Dendritic cell treated with granulocyte-macrophage colony-stimulating factor and Interleukin-4, amounts not matched to agents 40 ng/mL and 50 ng/mL, for 4 days (primary cell): ENCODE measurements at regions of chr3 and their contacts with region 1.

Region 1: GRCh38 chr3:119662604-119663373 is 2.4 kb upstream of the POPDC2 start:
- H3K4me3 Mint-ChIP-seq: no peak overlapping the region
- H3K27ac Mint-ChIP-seq: peak overlapping the region; percentile 1
- H3K4me1 Mint-ChIP-seq: peaks cover 67% of the 10 kb centered on the region
- H3K27me3 Mint-ChIP-seq: no peaks in the 10 kb centered on the region

Region 2: GRCh38 chr3:119104031-119104430 is 558.8 kb before region 1 on chr3:
- intact Hi-C with region 1: no loop called
- H3K4me3 Mint-ChIP-seq: no peak overlapping the region
- H3K27ac Mint-ChIP-seq: no peak overlapping the region
- H3K4me1 Mint-ChIP-seq: no peaks in the 10 kb centered on the region
- H3K27me3 Mint-ChIP-seq: peaks cover 2% of the 10 kb centered on the region

Region 3: DNA sequence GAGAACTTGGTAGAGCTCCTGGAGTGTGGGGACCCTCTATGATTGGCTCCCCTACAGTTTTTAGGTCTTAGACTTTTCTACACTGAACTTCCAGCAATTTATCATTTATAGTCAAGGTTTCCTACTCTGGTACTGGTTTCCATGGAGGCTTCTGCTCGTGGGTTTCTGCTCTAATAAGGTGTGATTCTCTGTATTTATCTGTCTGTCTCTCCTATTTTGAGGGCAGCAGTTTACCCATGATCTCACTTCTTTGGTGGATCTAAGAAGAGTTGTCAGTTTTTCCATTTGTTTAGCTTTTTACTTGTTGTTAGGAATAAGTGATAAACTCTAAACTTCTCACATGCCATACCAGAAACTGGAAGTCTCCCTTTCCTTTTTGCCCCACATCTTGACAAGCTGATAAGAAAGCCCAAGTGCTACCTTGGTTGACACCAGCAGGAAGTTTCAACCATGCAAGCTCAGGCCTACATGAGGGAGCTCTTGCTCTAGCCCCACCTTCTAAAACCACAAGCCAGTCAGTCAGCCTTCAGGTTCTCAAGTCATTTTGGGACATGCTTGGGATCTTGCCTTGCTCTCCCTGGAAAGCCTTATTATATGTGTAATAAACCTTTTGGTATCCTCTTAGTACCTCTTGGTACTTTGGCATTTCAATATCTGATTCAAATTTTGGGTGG is 154.5 kb before region 1 on chr3:
- intact Hi-C with region 1: no loop called
- H3K4me3 Mint-ChIP-seq: no peak overlapping the region
- H3K27ac Mint-ChIP-seq: no peak overlapping the region
- H3K4me1 Mint-ChIP-seq: peaks cover 30% of the 10 kb centered on the region
- H3K27me3 Mint-ChIP-seq: no peaks in the 10 kb centered on the region

Region 4: GRCh38 chr3:119600732-119601131 is 62.1 kb before region 1 on chr3:
- intact Hi-C with region 1: loop called (anchors 5 kb)
- H3K4me3 Mint-ChIP-seq: no peak overlapping the region
- H3K27ac Mint-ChIP-seq: peak overlapping the region; percentile 44
- H3K4me1 Mint-ChIP-seq: peaks cover 64% of the 10 kb centered on the region
- H3K27me3 Mint-ChIP-seq: no peaks in the 10 kb centered on the region

Region 5: DNA sequence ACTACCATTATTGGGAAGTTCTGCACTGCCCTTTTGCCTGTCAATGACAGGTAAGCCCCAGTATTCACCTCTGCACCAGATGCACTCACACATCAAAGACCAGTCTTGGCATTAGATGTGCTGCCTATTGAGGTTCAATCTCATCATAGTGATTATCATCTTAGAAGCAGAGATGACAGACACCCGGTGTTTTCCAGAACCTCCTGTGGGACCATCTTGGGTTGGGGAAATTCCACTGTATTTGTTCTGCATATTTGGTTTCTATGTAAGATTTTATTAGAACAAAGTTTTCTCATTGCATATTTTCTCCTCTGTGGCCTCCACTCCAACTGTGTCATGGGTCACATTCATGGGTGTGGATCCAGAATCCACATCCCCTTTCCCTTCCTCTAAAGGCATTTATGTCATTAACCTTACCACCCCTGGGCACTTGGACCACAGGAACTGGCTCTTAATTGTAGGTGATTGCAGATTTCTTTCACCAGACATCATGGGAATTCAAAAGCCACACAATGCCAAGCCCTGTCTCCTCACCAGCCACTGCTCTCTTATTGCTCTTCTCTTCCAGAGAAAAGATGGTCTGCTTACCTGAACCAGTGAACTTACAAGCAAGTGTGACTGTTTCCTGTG is 33.9 kb before region 1 on chr3:
- intact Hi-C with region 1: loop called (anchors 5 kb)
- H3K4me3 Mint-ChIP-seq: peak overlapping the region; percentile 6
- H3K27ac Mint-ChIP-seq: peak overlapping the region; percentile 89
- H3K4me1 Mint-ChIP-seq: peaks cover 92% of the 10 kb centered on the region
- H3K27me3 Mint-ChIP-seq: peaks cover 3% of the 10 kb centered on the region

Region 6: DNA sequence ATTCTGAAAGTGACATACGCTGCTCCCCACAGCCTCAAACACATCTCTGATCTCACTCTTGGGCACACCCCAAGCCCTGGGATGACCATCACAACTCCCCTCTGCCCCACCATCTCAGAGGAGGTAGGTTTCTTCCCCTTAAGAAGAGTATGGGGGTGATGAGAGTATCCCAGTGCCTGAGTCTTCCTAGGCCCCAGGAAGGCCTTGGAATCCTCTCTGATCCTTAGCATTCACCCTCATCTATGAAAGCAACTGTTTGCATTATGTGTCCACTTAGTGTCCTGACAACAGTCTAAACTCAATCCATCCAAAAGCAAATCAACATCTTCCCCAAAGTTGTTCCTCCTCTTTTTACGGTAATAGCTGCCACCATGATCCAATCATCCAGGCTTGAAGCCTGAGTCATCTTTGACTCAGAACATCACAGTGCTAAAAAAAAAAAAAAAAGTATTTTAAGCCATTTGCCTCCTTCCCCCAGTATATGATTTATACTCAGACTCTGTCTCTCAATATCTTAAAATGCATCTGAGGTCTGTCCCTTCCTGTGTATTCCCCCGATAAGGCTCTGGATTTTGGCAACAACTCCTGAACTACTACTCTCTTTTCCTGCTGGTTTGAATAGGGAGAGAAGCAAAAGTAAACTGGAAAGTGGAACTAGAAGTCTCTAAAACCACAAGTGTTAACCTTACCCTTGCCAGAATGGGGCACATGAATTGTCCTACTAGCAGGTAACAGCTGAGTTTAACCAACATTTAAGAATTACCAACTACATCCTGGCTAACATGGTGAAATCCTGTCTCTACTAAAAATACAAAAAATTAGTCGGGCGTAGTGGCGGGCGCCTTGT is 24.9 kb before region 1 on chr3:
- intact Hi-C with region 1: loop called (anchors 2 kb)
- H3K4me3 Mint-ChIP-seq: peak overlapping the region; percentile 64
- H3K27ac Mint-ChIP-seq: peak overlapping the region; percentile 99
- H3K4me1 Mint-ChIP-seq: peaks cover 75% of the 10 kb centered on the region
- H3K27me3 Mint-ChIP-seq: no peaks in the 10 kb centered on the region